CD8-positive, alpha-beta T cell (primary cell): ENCODE measurements at regions of chr5 and their contacts with region 1.

Region 1: GRCh38 chr5:151771259-151772028 is at the start of gene G3BP1:
- DNase-seq: peak; percentile 98 to 100 (median 99)
- ATAC-seq: peak; percentile 76
- H3K4me3 ChIP-seq: peak within 1 kb of the TSS; percentile 70 to 88
- H3K4me3 Mint-ChIP-seq: peak within 1 kb of the TSS; percentile 86
- H3K27ac ChIP-seq: peak within 1 kb of the TSS; percentile 84 to 94
- H3K27ac Mint-ChIP-seq: peak within 1 kb of the TSS; percentile 82
- H3K4me1 ChIP-seq: peaks cover 40% of the 10 kb centered on the region
- H3K4me1 Mint-ChIP-seq: peaks cover 44% of the 10 kb centered on the region
- H3K27me3 ChIP-seq: no peaks in the 10 kb centered on the region
- H3K27me3 Mint-ChIP-seq: no peaks in the 10 kb centered on the region
- CTCF ChIP-seq: peak; percentile 42
- total RNA-seq, gene G3BP1: 89.1 to 91.1 TPM

Region 2: DNA sequence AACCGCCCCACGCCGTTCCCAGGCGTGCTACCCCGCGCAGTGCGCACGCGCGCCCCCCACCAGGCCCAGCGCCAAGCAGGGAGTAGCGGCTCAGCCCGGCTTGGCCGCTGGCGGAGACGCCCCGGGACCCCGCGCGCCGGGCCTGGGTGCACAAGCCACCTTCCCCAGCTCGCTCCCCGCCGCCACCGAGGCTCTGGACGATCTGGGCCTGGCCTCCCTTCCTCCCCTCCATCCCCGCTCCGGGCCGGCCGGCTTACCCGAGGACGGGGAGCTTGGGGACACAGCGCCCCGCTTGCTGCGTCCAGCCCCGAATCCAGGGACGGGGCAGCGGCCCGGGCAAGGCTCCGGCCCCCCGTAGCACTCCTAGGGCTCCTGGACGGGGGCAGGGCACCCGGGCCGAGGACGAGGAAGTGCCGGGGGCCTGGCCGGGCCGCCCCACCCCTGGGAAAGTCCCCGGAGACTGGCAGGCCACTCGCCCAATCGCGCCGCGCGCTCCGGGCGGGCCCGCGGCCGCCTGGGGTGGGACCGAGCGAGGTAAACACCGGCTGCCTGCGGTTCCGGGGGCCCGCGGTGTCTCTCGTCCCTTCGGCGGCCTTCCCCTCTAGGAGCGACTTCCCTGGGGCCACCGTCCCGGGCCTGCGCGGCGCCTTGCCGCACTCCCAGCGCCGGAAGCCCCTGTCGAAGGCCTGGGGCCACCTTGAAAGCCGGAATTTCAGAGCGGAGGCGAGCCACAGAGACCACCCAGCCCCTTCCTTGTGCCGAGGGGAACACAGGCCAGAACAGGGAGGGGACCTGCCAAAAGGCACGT is 690.6 kb before region 1 on chr5 and contains the start of gene TNIP1:
- CTCF ChIA-PET with region 1: no interaction called
- POLR2A ChIA-PET with region 1: interaction called, 3 read pairs
- intact Hi-C with region 1: loop called in 1 of 2 experiments (anchors 5 kb)
- DNase-seq: peak; percentile 87 to 97 (median 94)
- ATAC-seq: peak; percentile 84
- H3K4me3 ChIP-seq: peak within 1 kb of the TSS; percentile 76
- H3K4me3 Mint-ChIP-seq: peak within 1 kb of the TSS; percentile 93
- H3K27ac ChIP-seq: peak within 1 kb of the TSS; percentile 70 to 98
- H3K27ac Mint-ChIP-seq: peak within 1 kb of the TSS; percentile 95
- H3K4me1 ChIP-seq: peaks cover 56% of the 10 kb centered on the region
- H3K4me1 Mint-ChIP-seq: peaks cover 80% of the 10 kb centered on the region
- H3K27me3 ChIP-seq: no peaks in the 10 kb centered on the region
- H3K27me3 Mint-ChIP-seq: no peaks in the 10 kb centered on the region
- CTCF ChIP-seq: no peak
- total RNA-seq, gene TNIP1: 133 to 134 TPM

Region 3: GRCh38 chr5:151157426-151158286 is 613.8 kb before region 1 on chr5 and contains the start of gene ANXA6:
- CTCF ChIA-PET with region 1: no interaction called
- POLR2A ChIA-PET with region 1: no interaction called
- intact Hi-C with region 1: loop called in 1 of 2 experiments (anchors 10 kb)
- DNase-seq: peak in 8 of 9 experiments; percentile 50 to 86 (median 66)
- ATAC-seq: peak; percentile 70
- H3K4me3 ChIP-seq: peak within 1 kb of the TSS; percentile 52 to 94
- H3K4me3 Mint-ChIP-seq: peak within 1 kb of the TSS; percentile 97
- H3K27ac ChIP-seq: peak within 1 kb of the TSS; percentile 68 to 90
- H3K27ac Mint-ChIP-seq: peak within 1 kb of the TSS; percentile 95
- H3K4me1 ChIP-seq: peaks cover 43% of the 10 kb centered on the region
- H3K4me1 Mint-ChIP-seq: peaks cover 65% of the 10 kb centered on the region
- H3K27me3 ChIP-seq: no peaks in the 10 kb centered on the region
- H3K27me3 Mint-ChIP-seq: no peaks in the 10 kb centered on the region
- CTCF ChIP-seq: no peak
- total RNA-seq, gene ANXA6: 83.5 to 89.4 TPM

Region 4: DNA sequence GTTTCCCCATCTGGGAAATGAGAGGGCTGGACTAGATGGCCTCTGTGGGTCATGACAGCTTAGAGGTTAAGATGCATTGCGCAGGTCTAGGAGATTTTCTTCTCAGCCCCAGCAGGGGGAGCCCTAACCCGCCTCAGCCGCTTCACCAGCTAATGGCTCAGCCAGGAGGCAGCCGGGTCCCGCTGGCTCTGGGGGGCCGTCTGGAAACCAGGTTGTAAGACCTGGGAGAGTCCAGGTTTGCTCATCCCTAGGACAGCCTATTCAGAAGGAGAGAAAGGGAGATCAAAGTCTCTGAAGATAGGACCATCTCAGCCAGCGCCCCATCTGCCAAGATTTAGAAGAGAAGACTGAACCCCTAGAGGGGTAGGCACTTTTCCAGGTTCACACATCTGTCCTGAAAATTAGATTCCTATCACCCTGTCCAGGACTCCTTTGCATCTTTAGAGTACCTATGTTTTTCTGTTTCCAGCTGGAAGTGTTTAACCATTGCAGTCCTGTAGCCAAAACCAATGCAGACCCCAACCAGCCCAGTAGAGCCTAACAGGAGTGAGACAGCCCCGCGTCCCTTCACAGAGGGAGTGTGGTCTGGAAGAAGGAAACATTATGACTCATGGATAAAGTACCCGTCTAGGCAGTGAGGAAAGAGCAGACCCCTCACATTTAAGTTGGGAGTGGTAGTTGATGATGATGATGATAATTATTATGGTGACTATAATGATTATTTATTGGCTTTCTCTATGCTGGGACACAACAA is 112.3 kb before region 1 on chr5:
- CTCF ChIA-PET with region 1: interaction called, 5 read pairs
- POLR2A ChIA-PET with region 1: interaction called, 4 read pairs
- intact Hi-C with region 1: loop called (anchors 1 kb)
- DNase-seq: peak; percentile 56 to 85 (median 78)
- ATAC-seq: peak; percentile 97
- H3K4me3 ChIP-seq: no peak overlapping the region
- H3K4me3 Mint-ChIP-seq: no peak overlapping the region
- H3K27ac ChIP-seq: no peak overlapping the region
- H3K27ac Mint-ChIP-seq: no peak overlapping the region
- H3K4me1 ChIP-seq: no peaks in the 10 kb centered on the region
- H3K4me1 Mint-ChIP-seq: peaks cover 6% of the 10 kb centered on the region
- H3K27me3 ChIP-seq: no peaks in the 10 kb centered on the region
- H3K27me3 Mint-ChIP-seq: no peaks in the 10 kb centered on the region
- CTCF ChIP-seq: peak; percentile 90

Region 5: GRCh38 chr5:151751091-151751490 is 20.4 kb before region 1 on chr5:
- CTCF ChIA-PET with region 1: interaction called, 5 read pairs
- POLR2A ChIA-PET with region 1: interaction called, 87 read pairs
- intact Hi-C with region 1: no loop called
- DNase-seq: no peak
- ATAC-seq: no peak
- H3K4me3 ChIP-seq: no peak overlapping the region
- H3K4me3 Mint-ChIP-seq: no peak overlapping the region
- H3K27ac ChIP-seq: no peak overlapping the region
- H3K27ac Mint-ChIP-seq: no peak overlapping the region
- H3K4me1 ChIP-seq: peaks cover 13% of the 10 kb centered on the region
- H3K4me1 Mint-ChIP-seq: peaks cover 35% of the 10 kb centered on the region
- H3K27me3 ChIP-seq: no peaks in the 10 kb centered on the region
- H3K27me3 Mint-ChIP-seq: no peaks in the 10 kb centered on the region
- CTCF ChIP-seq: no peak

Region 6: GRCh38 chr5:151784141-151784540 is 12.7 kb after region 1 on chr5:
- CTCF ChIA-PET with region 1: interaction called, 7 read pairs
- POLR2A ChIA-PET with region 1: interaction called, 6 read pairs
- intact Hi-C with region 1: loop called in 1 of 2 experiments (anchors 1 kb)
- DNase-seq: no peak
- ATAC-seq: no peak
- H3K4me3 ChIP-seq: no peak overlapping the region
- H3K4me3 Mint-ChIP-seq: no peak overlapping the region
- H3K27ac ChIP-seq: no peak overlapping the region
- H3K27ac Mint-ChIP-seq: no peak overlapping the region
- H3K4me1 ChIP-seq: peaks cover 39% of the 10 kb centered on the region
- H3K4me1 Mint-ChIP-seq: peaks cover 72% of the 10 kb centered on the region
- H3K27me3 ChIP-seq: no peaks in the 10 kb centered on the region
- H3K27me3 Mint-ChIP-seq: no peaks in the 10 kb centered on the region
- CTCF ChIP-seq: no peak

Region 7: GRCh38 chr5:151924564-151925301 is 153.3 kb after region 1 on chr5 and contains the start of gene GLRA1:
- CTCF ChIA-PET with region 1: no interaction called
- POLR2A ChIA-PET with region 1: no interaction called
- intact Hi-C with region 1: no loop called
- DNase-seq: peak; percentile 22 to 67 (median 50)
- ATAC-seq: peak; percentile 76
- H3K4me3 ChIP-seq: no peak within 1 kb of the TSS
- H3K4me3 Mint-ChIP-seq: no peak within 1 kb of the TSS
- H3K27ac ChIP-seq: no peak within 1 kb of the TSS
- H3K27ac Mint-ChIP-seq: no peak within 1 kb of the TSS
- H3K4me1 ChIP-seq: no peaks in the 10 kb centered on the region
- H3K4me1 Mint-ChIP-seq: peaks cover 2% of the 10 kb centered on the region
- H3K27me3 ChIP-seq: no peaks in the 10 kb centered on the region
- H3K27me3 Mint-ChIP-seq: peaks cover 28% of the 10 kb centered on the region
- CTCF ChIP-seq: no peak
- total RNA-seq, gene GLRA1: not detected